HEK293T (cell line): ENCODE measurements at regions of chr17 and their contacts with region 1.

Region 1: DNA sequence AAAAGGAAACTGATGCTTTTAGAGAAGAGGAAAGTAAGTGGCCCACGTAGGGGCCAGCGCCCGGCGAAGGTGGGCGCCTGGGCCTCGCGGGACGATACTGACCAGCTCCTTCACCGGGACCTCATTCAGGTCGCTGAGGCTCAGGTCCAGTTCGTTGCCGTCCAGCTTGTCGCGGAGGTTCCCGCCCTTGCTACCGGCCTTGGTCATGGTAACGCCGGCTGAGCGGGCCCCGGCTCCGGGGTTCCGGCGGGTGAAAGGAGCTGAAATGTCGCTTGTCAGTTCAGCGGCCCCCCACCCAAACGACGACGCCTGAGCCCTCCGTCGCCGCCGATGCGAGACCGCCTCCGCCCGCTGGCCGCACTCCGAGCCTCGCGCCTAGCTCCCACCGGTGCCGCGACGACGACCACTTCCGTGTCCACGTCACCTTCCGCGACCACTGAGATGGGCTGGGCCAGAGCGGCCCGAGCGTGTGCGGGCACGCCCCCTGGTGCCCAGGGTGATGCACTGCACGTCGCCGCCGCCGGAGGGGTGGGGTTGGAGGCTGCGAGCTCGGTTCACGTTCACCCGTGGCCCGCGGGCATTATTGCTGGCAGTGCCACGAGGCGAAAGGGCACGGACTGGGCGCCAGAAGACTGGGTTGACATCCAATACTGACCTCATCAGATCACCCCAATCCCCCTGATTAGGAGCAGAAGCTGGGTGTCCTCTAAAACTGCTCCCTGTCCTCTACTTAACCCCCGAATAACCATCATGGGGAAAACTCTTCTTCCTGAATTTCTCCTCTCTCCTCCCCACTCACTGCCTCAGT is at the start of gene LRRC59:
- DNase-seq: peak; percentile 95

Region 2: GRCh38 chr17:50345432-50346312 is 51.6 kb before region 1 on chr17 and contains the start of gene XYLT2:
- CTCF ChIA-PET with region 1: no interaction called
- POLR2A ChIA-PET with region 1: interaction called, 11 read pairs
- DNase-seq: peak; percentile 98

Region 3: GRCh38 chr17:50372758-50373556 is 24.4 kb before region 1 on chr17 and contains the starts of genes EME1 and MRPL27:
- CTCF ChIA-PET with region 1: interaction called, 4 read pairs
- POLR2A ChIA-PET with region 1: interaction called, 27 read pairs
- DNase-seq: peak; percentile 92

Region 4: DNA sequence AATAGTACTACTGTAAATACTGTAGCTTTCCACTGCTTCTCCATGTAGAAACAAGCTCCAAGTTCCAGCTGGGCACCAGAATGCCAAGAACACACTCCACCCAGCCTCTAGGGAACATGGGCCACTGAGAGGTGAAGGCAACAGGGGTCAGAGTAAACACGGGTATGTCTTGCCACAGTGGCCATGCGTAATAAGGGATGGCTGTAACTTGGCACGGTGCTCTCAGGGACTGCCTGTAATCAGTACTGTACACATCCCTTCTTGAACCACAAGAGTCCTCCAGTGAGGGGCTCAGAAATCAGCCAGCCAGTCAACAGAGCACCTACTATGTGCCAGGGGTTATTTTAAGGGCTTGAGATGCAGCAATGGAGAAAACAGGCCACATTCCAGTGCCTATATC is 10.8 kb before region 1 on chr17:
- CTCF ChIA-PET with region 1: interaction called, 9 read pairs
- POLR2A ChIA-PET with region 1: interaction called, 24 read pairs
- DNase-seq: no peak

Region 5: DNA sequence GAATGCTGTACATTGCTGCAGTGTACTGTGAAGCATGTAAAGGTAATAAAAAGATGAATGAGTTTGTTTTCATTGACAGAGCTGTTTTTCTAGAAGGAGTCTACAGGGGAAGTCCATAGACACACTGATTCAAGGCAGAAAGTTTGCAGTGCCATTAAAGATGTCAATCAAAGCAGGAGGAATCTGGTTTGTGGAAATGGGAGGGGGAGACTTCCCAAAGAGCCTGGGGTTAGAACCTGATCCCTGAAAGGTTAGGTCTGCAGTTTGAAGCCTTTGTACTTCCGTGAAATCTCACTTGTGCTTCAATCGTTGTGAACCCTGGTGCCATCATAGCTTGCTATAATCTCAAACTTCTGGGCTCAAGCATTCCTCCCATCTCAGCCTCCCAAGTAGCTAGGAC is 33.9 kb after region 1 on chr17:
- CTCF ChIA-PET with region 1: interaction called, 12 read pairs
- POLR2A ChIA-PET with region 1: interaction called, 41 read pairs
- DNase-seq: no peak